Calu3 (cell line): ENCODE measurements at regions of chr3 and their contacts with region 1.

Region 1: GRCh38 chr3:166810741-166811445 is 569.2 kb downstream of the ZBBX start:
- DNase-seq: no peak
- H3K4me3 Mint-ChIP-seq: no peak overlapping the region
- H3K27ac Mint-ChIP-seq: no peak overlapping the region
- H3K4me1 Mint-ChIP-seq: peaks cover 8% of the 10 kb centered on the region
- H3K27me3 Mint-ChIP-seq: no peaks in the 10 kb centered on the region
- CTCF ChIP-seq: no peak

Region 2: DNA sequence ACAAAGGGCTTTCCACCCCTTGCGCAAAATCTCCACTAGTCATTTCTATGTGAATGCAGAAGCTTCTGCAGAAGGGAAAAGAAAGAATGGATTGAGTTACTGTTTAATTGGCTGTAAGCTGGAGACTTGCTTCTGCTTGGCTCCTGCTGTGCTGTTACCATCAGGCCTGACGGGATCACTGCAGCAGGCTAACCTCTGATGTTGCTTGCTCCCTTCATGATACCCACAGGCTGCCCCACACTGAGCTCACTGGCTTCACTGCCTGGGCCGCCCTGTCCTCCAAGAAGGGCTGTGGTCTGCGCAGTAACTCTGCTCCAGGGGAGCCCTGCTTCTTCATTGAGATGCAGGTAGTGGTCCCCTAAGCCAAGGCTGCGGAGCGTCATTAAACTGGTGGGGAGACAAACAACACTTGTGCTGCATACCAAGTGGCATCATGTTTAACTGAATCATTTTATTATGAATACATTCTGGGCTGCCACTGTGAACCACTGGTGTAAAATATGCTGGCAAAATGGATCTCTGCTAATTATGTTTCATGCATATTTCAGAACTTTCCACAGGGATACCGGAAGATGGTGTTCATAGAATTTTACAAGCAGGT is 764.2 kb after region 1 on chr3:
- CTCF ChIA-PET with region 1: interaction called, 16 read pairs
- intact Hi-C with region 1: no loop called
- DNase-seq: no peak
- H3K4me3 Mint-ChIP-seq: no peak overlapping the region
- H3K27ac Mint-ChIP-seq: no peak overlapping the region
- H3K4me1 Mint-ChIP-seq: peaks cover 8% of the 10 kb centered on the region
- H3K27me3 Mint-ChIP-seq: peaks cover 10% of the 10 kb centered on the region
- CTCF ChIP-seq: no peak